Ascending aorta (tissue), 2 donors: ENCODE measurements at regions of chr1 and their contacts with region 1.

Region 1: GRCh38 chr1:170707959-170708655 is 44.2 kb downstream of the PRRX1 start:
- DNase-seq: peak in 1 of 2 donors; percentile 82
- H3K4me3 ChIP-seq: no peak overlapping the region
- H3K27ac ChIP-seq: peak overlapping the region; percentile 91 to 92
- H3K4me1 ChIP-seq: peaks cover 16 to 58% of the 10 kb centered on the region in 2 donors
- H3K27me3 ChIP-seq: no peaks in the 10 kb centered on the region
- CTCF ChIP-seq: no peak

Region 2: GRCh38 chr1:170680428-170680827 is 27.7 kb before region 1 on chr1:
- intact Hi-C with region 1: no loop called
- DNase-seq: no peak
- H3K4me3 ChIP-seq: no peak overlapping the region
- H3K27ac ChIP-seq: no peak overlapping the region
- H3K4me1 ChIP-seq: peaks cover 0 to 13% of the 10 kb centered on the region in 2 donors
- H3K27me3 ChIP-seq: no peaks in the 10 kb centered on the region
- CTCF ChIP-seq: no peak

Region 3: GRCh38 chr1:170692866-170693575 is 15.1 kb before region 1 on chr1:
- intact Hi-C with region 1: loop called (anchors 2 kb)
- DNase-seq: no peak
- H3K4me3 ChIP-seq: no peak overlapping the region
- H3K27ac ChIP-seq: peak overlapping the region; percentile 54 to 79
- H3K4me1 ChIP-seq: peaks cover 13 to 41% of the 10 kb centered on the region in 2 donors
- H3K27me3 ChIP-seq: no peaks in the 10 kb centered on the region
- CTCF ChIP-seq: no peak

Region 4: DNA sequence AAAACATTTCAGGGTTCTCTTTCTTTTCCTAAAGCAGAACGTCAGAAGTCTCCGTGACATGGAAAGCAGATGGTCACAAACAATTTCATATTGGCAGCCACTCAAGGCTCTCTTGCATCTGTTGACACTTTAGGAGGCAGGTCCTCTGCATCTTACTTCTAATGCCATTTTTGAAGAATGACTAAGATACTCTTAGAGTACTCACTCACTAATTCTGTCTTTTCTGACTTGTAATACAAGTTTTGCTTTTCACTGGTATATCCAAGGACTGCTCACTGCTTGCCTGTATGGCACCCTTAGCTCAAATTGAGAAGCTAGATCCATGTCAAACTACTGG is 24.1 kb after region 1 on chr1:
- intact Hi-C with region 1: loop called (anchors 2 kb)
- DNase-seq: no peak
- H3K4me3 ChIP-seq: no peak overlapping the region
- H3K27ac ChIP-seq: peak overlapping the region; percentile 12 to 17
- H3K4me1 ChIP-seq: peaks cover 4 to 8% of the 10 kb centered on the region in 2 donors
- H3K27me3 ChIP-seq: no peaks in the 10 kb centered on the region
- CTCF ChIP-seq: no peak

Region 5: DNA sequence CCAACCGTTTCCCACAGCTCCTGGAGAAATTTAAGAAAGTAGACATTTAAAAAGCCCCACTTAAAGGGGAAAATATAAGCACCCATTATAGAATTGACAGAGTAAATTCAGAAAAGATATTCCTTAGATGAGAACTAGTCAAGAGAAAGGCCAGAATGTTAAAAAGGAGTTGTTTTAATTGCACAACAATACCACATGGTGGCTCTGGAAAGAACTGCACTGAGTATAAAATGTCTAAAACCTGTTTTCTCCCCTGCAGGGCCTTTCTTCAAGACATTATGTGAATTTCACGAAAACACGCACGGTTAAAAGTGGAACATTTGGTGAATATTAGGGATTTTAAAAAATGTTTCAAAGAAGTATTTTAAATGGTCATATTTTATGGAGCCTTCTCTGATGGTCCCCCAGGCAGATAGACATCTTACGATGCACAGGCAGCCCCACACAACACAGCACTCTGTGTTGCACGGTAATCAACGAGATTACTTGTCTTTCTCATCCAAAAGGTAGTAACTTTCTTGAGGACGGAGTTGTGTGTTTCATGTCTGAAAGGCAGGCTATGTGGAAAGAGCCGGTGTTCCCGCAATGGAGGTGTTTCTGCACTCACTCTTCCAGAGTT is 57.7 kb after region 1 on chr1:
- intact Hi-C with region 1: no loop called
- DNase-seq: no peak
- H3K4me3 ChIP-seq: no peak overlapping the region
- H3K27ac ChIP-seq: no peak overlapping the region
- H3K4me1 ChIP-seq: no peaks in the 10 kb centered on the region
- H3K27me3 ChIP-seq: no peaks in the 10 kb centered on the region
- CTCF ChIP-seq: peak; percentile 59 to 72 (median 65)